ENCODE measurements at regions of chr5 and their contacts with region 1.

Region 1: GRCh38 chr5:115930626-115931337 is 31.5 kb upstream of the LVRN start:
- DNase-seq: no peak
- ATAC-seq: peak; percentile 25
- H3K4me3 ChIP-seq: no peak overlapping the region
- H3K27ac ChIP-seq: peak overlapping the region; percentile 93
- H3K4me1 ChIP-seq: peaks cover 44 to 78% of the 10 kb centered on the region in 2 experiments
- H3K27me3 ChIP-seq: no peaks in the 10 kb centered on the region
- CTCF ChIP-seq: no peak
- POLR2A ChIP-seq: no peak
- RAD21 ChIP-seq: no peak

Region 2: DNA sequence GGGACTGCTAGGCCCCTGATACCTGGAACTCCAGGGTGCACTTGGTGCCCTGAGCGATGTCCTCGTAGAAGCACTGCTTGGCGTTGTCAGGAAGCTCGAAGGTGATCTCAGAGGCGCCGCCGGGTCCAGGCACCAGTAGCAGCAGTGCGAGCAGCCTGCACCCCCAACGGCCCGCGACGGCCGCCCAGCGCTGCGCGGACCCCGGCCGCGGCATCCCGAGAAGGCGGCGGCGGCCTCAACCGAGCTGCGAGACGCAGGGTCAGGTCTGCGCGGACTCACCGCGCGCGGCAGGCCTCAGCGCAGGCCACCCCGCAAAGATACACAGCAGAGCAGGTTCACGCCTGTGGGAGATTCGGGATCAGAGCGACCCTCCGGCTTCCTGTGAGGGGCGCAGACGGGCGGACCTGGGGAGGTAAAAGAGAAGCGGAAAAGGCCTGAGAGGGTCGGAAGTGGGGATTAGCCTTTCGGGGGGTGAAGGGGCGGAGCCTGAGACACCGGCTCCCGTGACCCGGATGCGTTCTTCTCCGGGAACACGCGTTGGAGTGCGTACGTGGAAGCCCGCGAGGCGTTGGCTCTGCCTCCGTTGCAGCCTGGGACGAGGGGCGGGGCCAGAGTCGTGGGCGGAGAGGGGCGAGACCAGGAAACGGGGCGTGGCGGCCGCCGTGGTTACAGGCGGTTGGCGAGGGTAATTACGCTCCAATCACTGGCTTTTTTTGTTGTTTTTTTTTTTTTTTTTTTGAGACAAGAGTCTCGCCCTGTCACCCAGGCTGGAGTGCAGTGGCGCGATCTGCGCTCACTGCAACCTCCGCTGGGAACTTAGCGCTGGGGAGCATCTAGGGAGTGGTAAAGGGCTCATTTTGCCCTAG is 305.0 kb before region 1 on chr5 and contains the start of gene TMED7:
- CTCF ChIA-PET with region 1: no interaction called
- POLR2A ChIA-PET with region 1: no interaction called
- RAD21 ChIA-PET with region 1: no interaction called
- intact Hi-C with region 1: loop called (anchors 2 kb)
- DNase-seq: peak; percentile 96
- ATAC-seq: peak; percentile 95
- H3K4me3 ChIP-seq: peak within 1 kb of the TSS; percentile 92 to 94
- H3K27ac ChIP-seq: peak within 1 kb of the TSS; percentile 84
- H3K4me1 ChIP-seq: peaks cover 6 to 26% of the 10 kb centered on the region in 2 experiments
- H3K27me3 ChIP-seq: no peaks in the 10 kb centered on the region
- CTCF ChIP-seq: no peak
- POLR2A ChIP-seq: peak; percentile 92
- RAD21 ChIP-seq: no peak
- total RNA-seq, gene TMED7: 167 TPM

Region 3: GRCh38 chr5:115634343-115635132 is 296.2 kb before region 1 on chr5:
- CTCF ChIA-PET with region 1: no interaction called
- POLR2A ChIA-PET with region 1: no interaction called
- RAD21 ChIA-PET with region 1: no interaction called
- intact Hi-C with region 1: loop called (anchors 2 kb)
- DNase-seq: peak; percentile 70
- ATAC-seq: peak; percentile 92
- H3K4me3 ChIP-seq: peak overlapping the region in 1 of 2 experiments; percentile 13; a peak in 3 of 4 replicates
- H3K27ac ChIP-seq: no peak overlapping the region
- H3K4me1 ChIP-seq: peaks cover 4 to 34% of the 10 kb centered on the region in 2 experiments; a peak in 3 of 4 replicates
- H3K27me3 ChIP-seq: no peaks in the 10 kb centered on the region
- CTCF ChIP-seq: peak; percentile 81 to 89 (median 85)
- POLR2A ChIP-seq: no peak
- RAD21 ChIP-seq: peak; percentile 96

Region 4: GRCh38 chr5:115841382-115842088 is 89.2 kb before region 1 on chr5 and contains the starts of genes AP3S1 and ATG12:
- CTCF ChIA-PET with region 1: no interaction called
- POLR2A ChIA-PET with region 1: interaction called, 4 read pairs
- RAD21 ChIA-PET with region 1: no interaction called
- intact Hi-C with region 1: loop called (anchors 1 kb)
- DNase-seq: peak; percentile 91
- ATAC-seq: peak; percentile 77
- H3K4me3 ChIP-seq: peak within 1 kb of the TSS; percentile 83 to 87
- H3K27ac ChIP-seq: peak within 1 kb of the TSS; percentile 96
- H3K4me1 ChIP-seq: peaks cover 33 to 66% of the 10 kb centered on the region in 2 experiments
- H3K27me3 ChIP-seq: no peaks in the 10 kb centered on the region
- CTCF ChIP-seq: no peak
- POLR2A ChIP-seq: peak; percentile 58
- RAD21 ChIP-seq: no peak
- total RNA-seq, gene AP3S1: 432 TPM
- total RNA-seq, gene ATG12: 270 TPM

Region 5: DNA sequence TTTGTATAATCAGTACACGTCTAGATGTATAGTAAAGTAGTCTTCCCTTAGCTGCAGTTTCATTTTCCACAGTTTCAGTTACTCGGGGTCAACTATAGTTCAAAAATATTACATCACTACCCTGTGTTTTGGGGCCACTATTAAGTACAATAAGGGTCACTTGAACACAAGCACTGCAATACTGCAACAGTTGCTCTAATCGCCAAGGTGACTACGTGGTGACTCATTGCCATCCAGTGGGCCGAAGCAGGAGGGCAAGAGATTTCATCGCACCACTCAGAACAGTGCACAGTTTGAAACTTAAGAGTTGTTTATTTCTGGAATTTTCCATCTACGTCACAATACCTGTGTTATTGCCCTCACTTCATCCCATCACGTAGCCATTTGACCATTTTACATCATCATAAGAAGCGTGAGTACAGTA is 101.3 kb after region 1 on chr5 and contains the start of gene ARL14EPL:
- CTCF ChIA-PET with region 1: no interaction called
- POLR2A ChIA-PET with region 1: interaction called, 5 read pairs
- RAD21 ChIA-PET with region 1: no interaction called
- intact Hi-C with region 1: loop called (anchors 1 kb)
- DNase-seq: peak; percentile 99
- ATAC-seq: peak; percentile 97
- H3K4me3 ChIP-seq: peak within 1 kb of the TSS in 1 of 2 experiments; percentile 3; a peak in 1 of 4 replicates
- H3K27ac ChIP-seq: peak within 1 kb of the TSS; percentile 52
- H3K4me1 ChIP-seq: peaks cover 21 to 61% of the 10 kb centered on the region in 2 experiments
- H3K27me3 ChIP-seq: no peaks in the 10 kb centered on the region
- CTCF ChIP-seq: peak in 2 of 3 experiments; percentile 40 to 56; a peak in 3 of 6 replicates
- POLR2A ChIP-seq: no peak
- RAD21 ChIP-seq: peak; percentile 94
- total RNA-seq, gene ARL14EPL: 22.9 TPM

Region 6: DNA sequence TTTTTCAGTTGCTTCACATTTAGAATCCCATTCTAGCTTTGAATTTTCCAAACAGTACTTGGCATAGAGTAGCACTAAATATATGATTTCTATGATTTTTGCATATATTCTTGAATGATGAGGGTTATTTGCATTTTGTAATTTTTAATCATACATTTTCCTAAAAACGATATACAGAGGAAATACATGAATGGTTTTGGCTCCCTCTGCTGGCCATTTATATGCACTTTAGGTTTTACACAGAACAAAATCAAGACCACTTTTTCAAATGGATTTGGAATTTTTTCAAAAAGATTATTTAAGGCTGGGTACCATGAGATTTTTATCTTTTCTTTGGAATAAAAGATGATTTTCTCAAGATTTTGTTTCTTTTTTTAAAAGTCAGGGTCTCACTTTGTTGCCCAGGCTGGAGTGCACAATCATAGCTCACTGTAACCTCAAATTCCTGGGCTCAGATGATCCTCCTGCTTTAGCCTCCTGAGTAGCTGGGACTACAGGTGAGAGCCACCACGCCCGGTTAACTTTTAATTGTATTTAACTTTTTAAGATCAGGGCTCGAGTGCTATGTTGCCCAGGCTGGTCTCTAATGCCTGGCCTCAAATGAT is 137.3 kb after region 1 on chr5:
- CTCF ChIA-PET with region 1: interaction called, 7 read pairs
- POLR2A ChIA-PET with region 1: no interaction called
- RAD21 ChIA-PET with region 1: no interaction called
- intact Hi-C with region 1: loop called (anchors 1 kb)
- DNase-seq: peak; percentile 78
- ATAC-seq: peak; percentile 76
- H3K4me3 ChIP-seq: no peak overlapping the region
- H3K27ac ChIP-seq: no peak overlapping the region; the same call in 1 of the 2 replicates
- H3K4me1 ChIP-seq: peaks cover 4 to 31% of the 10 kb centered on the region in 2 experiments; a peak in 3 of 4 replicates
- H3K27me3 ChIP-seq: no peaks in the 10 kb centered on the region
- CTCF ChIP-seq: peak; percentile 79 to 99 (median 83)
- POLR2A ChIP-seq: no peak
- RAD21 ChIP-seq: peak; percentile 98

Region 7: GRCh38 chr5:116084871-116085715 is 154.3 kb after region 1 on chr5 and contains the start of gene COMMD10:
- CTCF ChIA-PET with region 1: no interaction called
- POLR2A ChIA-PET with region 1: interaction called, 4 read pairs
- RAD21 ChIA-PET with region 1: no interaction called
- intact Hi-C with region 1: loop called (anchors 1 kb)
- DNase-seq: peak; percentile 85
- ATAC-seq: peak; percentile 86
- H3K4me3 ChIP-seq: peak within 1 kb of the TSS; percentile 67 to 80
- H3K27ac ChIP-seq: peak within 1 kb of the TSS; percentile 88
- H3K4me1 ChIP-seq: peaks cover 7 to 43% of the 10 kb centered on the region in 2 experiments
- H3K27me3 ChIP-seq: no peaks in the 10 kb centered on the region
- CTCF ChIP-seq: no peak
- POLR2A ChIP-seq: peak; percentile 91
- RAD21 ChIP-seq: no peak
- total RNA-seq, gene COMMD10: 35.3 TPM

Measured in HCT116 (cell line).